PC-9 (cell line): ENCODE measurements at regions of chr14 and their contacts with region 1.

Region 1: DNA sequence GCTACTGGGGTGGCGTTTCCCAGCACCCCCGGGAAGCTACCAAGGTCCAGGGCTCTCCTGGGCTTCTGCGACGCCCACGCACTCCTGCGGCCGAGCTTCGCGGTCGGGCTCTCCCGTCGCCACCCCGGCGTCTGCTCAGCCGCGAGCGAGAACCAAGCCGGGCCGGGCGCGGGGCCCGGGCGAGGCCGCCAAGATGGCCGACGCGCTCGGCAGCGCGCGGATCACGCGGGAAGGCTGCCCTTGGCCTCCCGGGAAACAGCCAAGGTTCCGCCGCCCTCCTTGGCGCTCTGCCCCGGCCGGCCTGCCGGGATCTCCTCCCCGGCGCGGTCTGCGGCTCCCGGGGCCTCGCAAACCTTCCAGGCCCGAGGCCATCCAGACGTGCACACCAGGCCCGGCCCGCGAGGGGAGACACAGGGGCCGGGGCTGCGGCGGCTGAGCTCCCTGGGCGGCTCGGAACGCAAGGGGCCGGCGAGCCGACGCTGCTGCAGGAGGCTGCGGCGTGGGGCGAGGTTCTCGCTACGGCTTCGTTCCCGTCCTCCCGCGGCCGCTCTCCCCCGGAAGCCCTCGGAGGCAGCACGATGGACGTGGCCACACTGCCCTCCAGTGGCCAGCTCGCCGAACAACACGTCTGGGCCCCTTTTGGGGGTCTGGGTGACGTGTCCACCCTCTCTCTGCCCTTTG is 23.5 kb upstream of the ZFP36L1 start:
- DNase-seq: peak; percentile 69 to 92
- H3K4me3 ChIP-seq: peak overlapping the region; percentile 57
- H3K27ac ChIP-seq: peak overlapping the region; percentile 81
- H3K4me1 ChIP-seq: peaks cover 50% of the 10 kb centered on the region
- H3K27me3 ChIP-seq: no peaks in the 10 kb centered on the region
- CTCF ChIP-seq: peak; percentile 98

Region 2: GRCh38 chr14:67837011-67837624 is 979.3 kb before region 1 on chr14:
- CTCF ChIA-PET with region 1: no interaction called
- POLR2A ChIA-PET with region 1: no interaction called
- intact Hi-C with region 1: loop called (anchors 2 kb)
- DNase-seq: peak; percentile 40 to 65
- H3K4me3 ChIP-seq: no peak overlapping the region
- H3K27ac ChIP-seq: no peak overlapping the region
- H3K4me1 ChIP-seq: no peaks in the 10 kb centered on the region
- H3K27me3 ChIP-seq: no peaks in the 10 kb centered on the region
- CTCF ChIP-seq: peak; percentile 79

Region 3: GRCh38 chr14:67883717-67884116 is 932.7 kb before region 1 on chr14:
- CTCF ChIA-PET with region 1: interaction called, 5 read pairs
- POLR2A ChIA-PET with region 1: no interaction called
- intact Hi-C with region 1: loop called (anchors 2 kb)
- DNase-seq: peak in 1 of 2 experiments; percentile 43
- H3K4me3 ChIP-seq: no peak overlapping the region
- H3K27ac ChIP-seq: no peak overlapping the region
- H3K4me1 ChIP-seq: no peaks in the 10 kb centered on the region
- H3K27me3 ChIP-seq: no peaks in the 10 kb centered on the region
- CTCF ChIP-seq: peak; percentile 64

Region 4: DNA sequence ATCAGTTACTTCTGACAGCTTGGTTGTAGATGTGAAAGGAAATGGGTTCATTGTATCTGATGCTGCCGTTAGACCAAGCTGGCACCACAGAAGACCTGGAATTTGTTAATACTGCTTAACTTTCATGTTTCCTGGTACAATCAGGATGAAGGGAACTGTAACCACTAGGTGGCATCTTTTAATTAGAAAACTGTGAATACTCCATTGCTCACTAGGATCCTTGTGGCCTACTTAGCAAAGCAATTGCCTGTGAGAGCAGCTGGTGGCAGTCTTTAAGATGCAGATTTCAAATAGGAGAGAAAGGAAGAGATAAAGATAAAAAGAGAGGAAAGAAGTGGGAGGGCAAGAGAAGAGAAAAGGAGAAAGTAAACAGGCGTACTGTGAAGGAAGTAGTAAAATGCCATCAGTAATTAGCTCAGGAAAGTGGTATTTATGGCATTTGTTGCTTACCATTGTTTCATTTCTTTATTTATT is 882.4 kb before region 1 on chr14:
- CTCF ChIA-PET with region 1: interaction called, 8 read pairs
- POLR2A ChIA-PET with region 1: interaction called, 3 read pairs
- intact Hi-C with region 1: loop called (anchors 1 kb)
- DNase-seq: peak in 1 of 2 experiments; percentile 64
- H3K4me3 ChIP-seq: no peak overlapping the region
- H3K27ac ChIP-seq: no peak overlapping the region
- H3K4me1 ChIP-seq: 0 out of 2 replicates have a peak, but pooled peaks cover 7% of the 10 kb centered on the region
- H3K27me3 ChIP-seq: no peaks in the 10 kb centered on the region
- CTCF ChIP-seq: peak; percentile 79

Region 5: DNA sequence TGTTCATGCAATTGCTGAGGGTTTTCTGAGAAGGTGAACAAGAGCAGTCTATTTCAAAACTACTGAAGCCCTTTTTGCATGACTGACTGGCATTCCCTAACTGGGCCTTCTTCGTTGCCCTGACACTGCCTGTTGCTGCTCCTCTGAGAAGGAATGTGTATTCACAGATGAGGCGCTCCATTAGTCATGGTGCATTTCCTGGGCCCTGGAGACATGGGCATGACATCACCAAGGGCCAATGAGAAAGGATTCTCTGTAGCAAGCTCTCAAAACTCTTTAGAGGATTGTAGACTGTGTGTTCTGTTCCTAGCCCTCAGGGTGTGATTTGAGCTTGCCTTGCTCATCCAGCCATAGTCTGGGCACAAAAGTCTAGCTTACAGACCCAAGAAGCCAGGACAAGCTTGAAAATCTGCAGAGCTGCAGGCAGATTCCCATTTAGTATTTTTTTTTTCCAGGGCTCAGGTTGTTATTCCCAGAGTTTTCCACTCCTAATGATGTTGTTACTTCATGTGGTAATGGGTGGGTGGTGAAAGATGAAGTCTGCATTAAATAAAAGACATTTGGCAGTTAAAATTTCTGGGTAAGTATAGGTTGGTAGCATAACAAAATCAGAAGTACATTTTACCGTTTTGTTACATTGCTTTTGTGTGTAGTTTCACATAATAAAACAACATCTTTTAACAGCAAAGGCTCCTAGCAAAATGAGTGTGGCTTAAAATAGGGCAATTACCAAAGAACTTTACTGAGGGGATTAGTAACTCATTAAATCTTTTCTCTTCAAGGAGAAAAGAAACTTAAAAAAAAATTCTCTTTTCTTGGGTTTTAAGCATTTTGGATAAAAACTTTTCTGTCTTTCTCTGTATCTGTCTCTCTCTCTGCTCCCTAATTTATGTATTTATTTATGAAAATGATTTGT is 678.4 kb before region 1 on chr14:
- CTCF ChIA-PET with region 1: no interaction called
- POLR2A ChIA-PET with region 1: no interaction called
- intact Hi-C with region 1: loop called (anchors 1 kb)
- DNase-seq: peak; percentile 88 to 92
- H3K4me3 ChIP-seq: no peak overlapping the region
- H3K27ac ChIP-seq: peak overlapping the region; percentile 57
- H3K4me1 ChIP-seq: peaks cover 58% of the 10 kb centered on the region
- H3K27me3 ChIP-seq: no peaks in the 10 kb centered on the region
- CTCF ChIP-seq: no peak

Region 6: GRCh38 chr14:68307014-68307789 is 509.2 kb before region 1 on chr14:
- CTCF ChIA-PET with region 1: no interaction called
- POLR2A ChIA-PET with region 1: interaction called, 13 read pairs
- intact Hi-C with region 1: no loop called
- DNase-seq: peak; percentile 73 to 99
- H3K4me3 ChIP-seq: peak overlapping the region; percentile 22; the same call in 1 of the 2 replicates
- H3K27ac ChIP-seq: peak overlapping the region; percentile 95
- H3K4me1 ChIP-seq: peaks cover 62% of the 10 kb centered on the region
- H3K27me3 ChIP-seq: no peaks in the 10 kb centered on the region
- CTCF ChIP-seq: no peak